ENCODE measurements at regions of chr3 and their contacts with region 1.

Region 1: GRCh38 chr3:14863333-14864100 is 44.8 kb downstream of the FGD5 start:
- DNase-seq: no peak
- ATAC-seq: no peak
- H3K4me3 ChIP-seq: no peak overlapping the region
- H3K27ac ChIP-seq: peak overlapping the region in 2 of 4 donors; percentile 29 to 33
- H3K4me1 ChIP-seq: peaks cover 16 to 29% of the 10 kb centered on the region in 2 donors
- H3K27me3 ChIP-seq: no peaks in the 10 kb centered on the region
- CTCF ChIP-seq: peak in 2 of 5 experiments; percentile 25 to 29
- POLR2A ChIP-seq: no peak

Region 2: DNA sequence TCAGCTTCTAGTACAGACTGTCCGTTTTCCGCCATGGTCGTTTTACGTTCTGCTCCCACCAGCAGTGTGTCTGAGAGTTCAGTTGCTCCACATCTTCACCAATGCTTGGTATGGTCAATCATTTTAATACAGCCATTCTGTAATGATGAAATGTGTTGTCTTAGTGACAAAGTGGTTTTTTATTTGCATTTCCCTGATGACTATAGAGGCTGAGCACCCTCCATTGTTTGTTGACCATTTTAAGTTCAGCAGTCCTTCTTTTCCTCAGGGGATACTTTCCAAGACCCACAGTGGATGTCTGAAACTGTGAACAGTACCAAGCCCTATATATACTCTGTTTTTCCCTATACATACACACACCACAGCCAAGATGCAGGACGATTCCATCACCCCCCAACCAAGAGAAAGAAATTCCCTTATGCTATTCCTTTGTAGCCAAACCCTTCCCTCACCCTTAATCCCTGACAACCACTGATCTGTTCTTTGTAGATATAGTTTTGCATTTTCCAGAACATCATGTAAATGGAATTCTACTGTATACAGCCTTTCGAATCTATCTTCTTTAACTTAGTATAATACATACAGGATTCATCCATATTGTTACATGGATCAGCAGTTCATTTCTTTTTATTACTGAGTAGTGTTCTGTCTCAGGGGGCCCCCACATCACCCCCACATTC is 132.7 kb before region 1 on chr3:
- in situ Hi-C with region 1: no loop called
- intact Hi-C with region 1: no loop called
- DNase-seq: no peak
- ATAC-seq: no peak
- H3K4me3 ChIP-seq: no peak overlapping the region
- H3K27ac ChIP-seq: no peak overlapping the region
- H3K4me1 ChIP-seq: peaks cover 0 to 7% of the 10 kb centered on the region in 2 donors
- H3K27me3 ChIP-seq: no peaks in the 10 kb centered on the region
- CTCF ChIP-seq: no peak
- POLR2A ChIP-seq: no peak

Region 3: DNA sequence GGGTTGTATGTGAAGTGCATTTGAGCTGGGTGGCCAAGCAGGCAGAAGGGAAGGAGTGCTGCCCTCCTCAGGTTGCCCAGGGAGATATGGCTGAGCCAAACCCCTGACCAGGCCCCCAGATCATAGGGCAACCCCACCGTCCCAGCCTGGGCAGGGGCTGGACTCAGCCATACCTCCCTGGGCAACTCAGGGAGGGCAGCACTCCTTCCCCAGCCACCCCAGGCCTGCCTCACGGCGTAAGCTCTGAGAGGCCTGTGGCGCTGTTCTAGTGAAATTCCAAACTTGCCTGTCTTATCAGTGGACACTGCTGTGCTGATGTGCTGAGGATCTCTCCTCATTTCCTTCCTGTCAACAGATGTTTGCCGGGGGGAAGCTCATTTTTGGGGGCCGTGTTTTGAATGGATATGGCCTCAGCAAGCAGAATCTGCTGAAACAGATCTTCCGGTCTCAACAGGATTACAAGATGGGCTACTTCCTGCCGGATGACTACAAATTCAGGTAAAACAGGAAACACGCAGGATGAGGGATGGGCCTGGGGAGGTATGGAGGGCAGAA is 102.3 kb before region 1 on chr3:
- in situ Hi-C with region 1: no loop called
- intact Hi-C with region 1: no loop called
- DNase-seq: no peak
- ATAC-seq: no peak
- H3K4me3 ChIP-seq: no peak overlapping the region
- H3K27ac ChIP-seq: no peak overlapping the region
- H3K4me1 ChIP-seq: no peaks in the 10 kb centered on the region
- H3K27me3 ChIP-seq: no peaks in the 10 kb centered on the region
- CTCF ChIP-seq: no peak
- POLR2A ChIP-seq: no peak

Region 4: GRCh38 chr3:14902719-14903118 is 39.2 kb after region 1 on chr3:
- in situ Hi-C with region 1: no loop called
- intact Hi-C with region 1: loop called (anchors 5 kb)
- DNase-seq: peak; percentile 17 to 46
- ATAC-seq: peak; percentile 75 to 77
- H3K4me3 ChIP-seq: no peak overlapping the region
- H3K27ac ChIP-seq: no peak overlapping the region
- H3K4me1 ChIP-seq: no peaks in the 10 kb centered on the region
- H3K27me3 ChIP-seq: no peaks in the 10 kb centered on the region
- CTCF ChIP-seq: no peak
- POLR2A ChIP-seq: no peak

Region 5: DNA sequence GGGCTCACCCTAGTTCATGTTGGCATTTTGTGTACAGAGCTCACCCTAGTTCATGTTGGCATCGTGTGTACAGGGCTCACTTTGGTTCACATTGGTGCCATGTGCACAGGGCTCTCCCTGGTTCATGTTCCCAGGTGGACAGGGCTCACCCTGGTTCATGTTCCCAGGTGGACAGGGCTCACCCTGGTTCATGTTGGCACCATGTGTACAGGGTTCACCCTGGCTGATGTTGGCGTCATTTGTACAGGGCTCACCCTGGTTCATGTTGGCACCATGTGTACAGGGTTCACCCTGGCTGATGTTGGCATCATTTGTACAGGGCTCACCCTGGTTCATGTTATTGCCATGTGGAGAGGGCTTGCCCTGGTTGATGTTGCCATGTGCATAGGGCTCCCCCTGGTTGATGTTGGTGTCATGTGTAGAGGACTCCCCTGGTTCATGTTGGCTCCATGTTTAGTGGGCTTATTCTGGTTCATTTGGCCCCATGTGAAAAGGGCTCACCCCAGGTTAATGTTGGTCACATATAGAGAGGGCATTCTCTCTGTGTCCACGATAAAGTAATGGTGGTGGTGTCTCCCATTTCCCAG is 52.2 kb after region 1 on chr3:
- in situ Hi-C with region 1: no loop called
- intact Hi-C with region 1: loop called (anchors 5 kb)
- DNase-seq: no peak
- ATAC-seq: no peak
- H3K4me3 ChIP-seq: no peak overlapping the region
- H3K27ac ChIP-seq: no peak overlapping the region
- H3K4me1 ChIP-seq: no peaks in the 10 kb centered on the region
- H3K27me3 ChIP-seq: no peaks in the 10 kb centered on the region
- CTCF ChIP-seq: peak in 1 of 5 experiments; percentile 22
- POLR2A ChIP-seq: no peak